BJ (cell line): ENCODE measurements at regions of chr3 and their contacts with region 1.

Region 1: GRCh38 chr3:182925330-182925943 is 54.9 kb downstream of the DCUN1D1 start:
- DNase-seq: no peak
- H3K4me3 ChIP-seq: no peak overlapping the region
- H3K27me3 ChIP-seq: no peaks in the 10 kb centered on the region
- CTCF ChIP-seq: no peak

Region 2: GRCh38 chr3:183085634-183086390 is 160.4 kb after region 1 on chr3:
- CTCF ChIA-PET with region 1: no interaction called
- POLR2A ChIA-PET with region 1: interaction called, 14 read pairs
- DNase-seq: no peak
- H3K4me3 ChIP-seq: no peak overlapping the region
- H3K27me3 ChIP-seq: no peaks in the 10 kb centered on the region
- CTCF ChIP-seq: peak; percentile 41